Motor neuron (in vitro differentiated cells): ENCODE measurements at regions of chr1 and their contacts with region 1.

Region 1: DNA sequence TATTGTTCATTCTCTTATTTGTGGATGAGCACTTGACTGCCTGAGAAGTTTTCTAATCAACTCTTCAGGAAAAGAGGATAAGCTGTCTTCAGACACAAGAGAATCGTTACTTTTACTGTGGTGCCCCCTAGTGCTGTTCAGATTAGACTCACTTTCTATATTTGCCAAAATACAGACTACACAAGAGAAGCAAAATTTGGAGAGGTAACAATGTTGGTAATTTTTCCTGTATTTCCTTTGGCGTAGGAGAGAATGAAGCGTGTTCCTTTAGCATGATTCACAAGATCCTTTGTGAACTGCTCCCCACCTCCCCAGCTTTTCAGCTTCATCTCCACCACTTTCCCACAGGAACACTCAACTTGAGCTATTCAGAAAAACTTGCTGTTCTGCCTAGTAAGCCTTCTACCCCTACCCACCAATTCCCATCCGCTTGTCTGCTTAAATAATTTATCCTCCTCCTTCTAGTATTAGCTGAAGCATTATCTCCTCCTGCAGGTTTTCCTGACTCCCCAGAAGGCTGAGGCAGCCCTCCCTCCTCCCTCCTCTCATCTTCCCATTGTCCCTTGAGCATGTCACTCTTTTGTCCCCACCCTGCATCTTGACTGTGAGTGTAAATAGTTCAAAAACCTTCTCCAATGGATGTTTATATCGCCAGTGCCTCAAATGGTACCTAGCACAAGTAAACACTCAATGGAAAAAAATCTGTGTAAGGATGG is 4.5 kb downstream of the TNFSF4 start:
- ATAC-seq: peak in 4 of 8 experiments; percentile 47 to 82 (median 80)
- H3K4me3 ChIP-seq: no peak overlapping the region
- H3K27ac ChIP-seq: no peak overlapping the region
- H3K4me1 ChIP-seq: no peaks in the 10 kb centered on the region

Region 2: DNA sequence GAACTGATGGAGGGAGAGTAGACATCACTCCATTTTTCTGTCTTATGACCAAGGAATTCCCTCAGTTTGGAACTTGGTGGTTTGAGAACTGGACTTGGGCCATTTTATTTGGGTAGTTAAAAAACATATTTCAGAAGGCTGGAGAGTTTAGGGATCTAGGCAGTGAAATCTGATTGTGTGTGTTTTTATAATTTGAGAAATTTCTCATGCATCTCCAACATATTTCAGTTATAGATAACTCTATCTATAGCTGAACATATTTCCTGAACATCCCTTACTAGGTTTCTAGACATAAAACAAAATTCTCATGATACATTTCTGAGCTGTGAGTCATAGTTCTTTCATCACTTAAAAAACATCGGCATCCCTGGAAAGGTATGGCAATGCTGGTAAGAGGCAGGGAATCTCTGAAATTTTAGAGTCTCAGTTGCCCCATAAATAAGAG is 441.0 kb before region 1 on chr1:
- in situ Hi-C with region 1: loop called in 1 of 9 experiments (anchors 25 kb)
- ATAC-seq: no peak
- H3K4me3 ChIP-seq: no peak overlapping the region
- H3K27ac ChIP-seq: no peak overlapping the region
- H3K4me1 ChIP-seq: no peaks in the 10 kb centered on the region

Region 3: GRCh38 chr1:172826096-172826743 is 376.4 kb before region 1 on chr1:
- in situ Hi-C with region 1: loop called in 1 of 9 experiments (anchors 10 kb)
- ATAC-seq: peak in 7 of 8 experiments; percentile 44 to 90 (median 74)
- H3K4me3 ChIP-seq: no peak overlapping the region
- H3K27ac ChIP-seq: no peak overlapping the region
- H3K4me1 ChIP-seq: peaks cover 3% of the 10 kb centered on the region in 2 donors

Region 4: GRCh38 chr1:173255214-173255813 is 52.7 kb after region 1 on chr1:
- in situ Hi-C with region 1: no loop called
- ATAC-seq: peak in 3 of 8 experiments; percentile 53 to 61 (median 57)
- H3K4me3 ChIP-seq: no peak overlapping the region
- H3K27ac ChIP-seq: no peak overlapping the region
- H3K4me1 ChIP-seq: no peaks in the 10 kb centered on the region

Region 5: DNA sequence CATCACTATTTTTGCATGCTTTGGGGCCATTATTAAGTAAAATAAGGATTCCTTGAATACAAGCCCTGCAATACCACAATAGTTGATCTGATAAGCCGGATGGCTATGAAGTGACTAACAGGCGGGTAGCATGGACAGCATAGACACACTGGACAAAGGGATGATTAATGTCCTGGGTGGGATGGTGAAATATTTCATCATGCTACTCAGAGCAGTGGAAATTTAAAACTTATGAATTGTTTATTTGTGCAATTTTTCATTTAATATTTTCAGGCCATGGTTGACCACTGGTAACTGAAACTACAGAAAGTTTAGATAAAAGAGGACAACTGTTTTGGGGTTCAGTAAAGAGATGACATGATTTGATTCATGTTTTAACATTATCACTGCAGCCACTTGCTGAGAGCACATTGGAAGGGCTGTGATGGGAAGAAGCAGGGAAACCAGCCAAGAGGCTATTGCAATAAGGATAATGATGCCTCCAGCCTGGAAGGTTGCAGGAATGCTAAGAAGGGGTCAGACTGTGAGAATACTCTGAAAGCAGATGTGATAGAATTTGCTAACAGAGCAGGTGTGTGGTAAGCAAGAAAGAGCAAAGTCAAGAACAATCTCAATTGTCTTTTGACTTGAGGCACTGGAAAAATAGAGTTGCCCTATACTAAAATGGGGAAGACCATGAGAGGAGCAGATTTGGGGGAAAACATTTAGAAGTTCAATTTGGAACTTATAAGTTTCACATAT is 67.1 kb after region 1 on chr1:
- in situ Hi-C with region 1: no loop called
- ATAC-seq: peak in 7 of 8 experiments; percentile 94 to 99 (median 97)
- H3K4me3 ChIP-seq: no peak overlapping the region
- H3K27ac ChIP-seq: peak overlapping the region; percentile 35 to 62
- H3K4me1 ChIP-seq: peaks cover 15 to 16% of the 10 kb centered on the region in 2 donors